ENCODE measurements at regions of chr2 and their contacts with region 1.

Region 1: DNA sequence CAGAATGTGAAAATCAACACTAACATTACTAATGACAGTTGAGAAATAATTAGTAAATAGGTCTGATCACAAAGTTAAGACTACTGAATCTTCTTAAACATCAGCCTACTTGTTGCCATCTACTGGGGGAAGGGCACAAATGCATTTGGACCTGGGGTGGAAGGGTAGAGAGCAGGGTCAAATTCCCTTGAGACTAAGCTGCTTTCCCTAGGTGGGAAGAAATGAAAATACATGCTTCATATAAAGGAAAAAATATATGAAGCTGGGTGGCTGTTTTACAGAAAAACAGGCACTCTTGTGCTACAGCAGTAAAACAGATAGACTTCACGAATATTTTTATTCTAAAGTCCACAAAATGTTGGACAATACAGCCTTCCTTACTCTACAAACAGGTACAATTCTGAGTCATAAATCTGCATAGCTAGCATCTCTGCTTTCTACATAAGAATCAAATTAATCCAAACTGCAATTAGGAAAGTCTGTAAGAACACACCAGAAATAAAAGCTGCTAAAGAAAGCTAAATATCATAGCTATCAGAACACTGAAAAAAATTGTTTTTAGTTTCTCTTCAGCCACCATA is 10.9 kb downstream of the TRIP12 start:
- DNase-seq: no peak
- H3K4me3 Mint-ChIP-seq: no peak overlapping the region
- H3K27ac Mint-ChIP-seq: peak overlapping the region; percentile 10
- H3K4me1 Mint-ChIP-seq: peaks cover 37% of the 10 kb centered on the region
- H3K27me3 Mint-ChIP-seq: no peaks in the 10 kb centered on the region

Region 2: GRCh38 chr2:229780856-229781773 is 129.8 kb before region 1 on chr2:
- CTCF ChIA-PET with region 1: interaction called, 11 read pairs
- POLR2A ChIA-PET with region 1: no interaction called
- DNase-seq: no peak
- H3K4me3 Mint-ChIP-seq: no peak overlapping the region
- H3K27ac Mint-ChIP-seq: no peak overlapping the region
- H3K4me1 Mint-ChIP-seq: peaks cover 19% of the 10 kb centered on the region
- H3K27me3 Mint-ChIP-seq: no peaks in the 10 kb centered on the region

Region 3: GRCh38 chr2:229921892-229922445 is 11.0 kb after region 1 on chr2 and contains the start of gene TRIP12:
- CTCF ChIA-PET with region 1: interaction called, 11 read pairs
- POLR2A ChIA-PET with region 1: interaction called, 39 read pairs
- DNase-seq: peak; percentile 89
- H3K4me3 Mint-ChIP-seq: peak within 1 kb of the TSS; percentile 93
- H3K27ac Mint-ChIP-seq: peak within 1 kb of the TSS; percentile 98
- H3K4me1 Mint-ChIP-seq: peaks cover 51% of the 10 kb centered on the region
- H3K27me3 Mint-ChIP-seq: no peaks in the 10 kb centered on the region
- total RNA-seq, gene TRIP12: 224 to 229 TPM

Measured in activated CD4-positive, alpha-beta memory T cell treated with anti-CD3 and anti-CD28 coated beads, Interleukin-2, amount 10 ng/mL, durations not matched to agents 7 days and 5 days (primary cell).